ENCODE measurements at regions of chr7 and their contacts with region 1.

Region 1: GRCh38 chr7:45111298-45112223 is at the start of gene TBRG4:
- DNase-seq: peak; percentile 94
- ATAC-seq: peak; percentile 93
- H3K4me3 Mint-ChIP-seq: peak within 1 kb of the TSS; percentile 98
- H3K27ac Mint-ChIP-seq: peak within 1 kb of the TSS; percentile 97
- H3K4me1 Mint-ChIP-seq: peaks cover 44% of the 10 kb centered on the region
- H3K27me3 Mint-ChIP-seq: peaks cover 4% of the 10 kb centered on the region
- CTCF ChIP-seq: no peak
- total RNA-seq, gene TBRG4: 109 and 128 TPM in 2 replicates

Region 2: DNA sequence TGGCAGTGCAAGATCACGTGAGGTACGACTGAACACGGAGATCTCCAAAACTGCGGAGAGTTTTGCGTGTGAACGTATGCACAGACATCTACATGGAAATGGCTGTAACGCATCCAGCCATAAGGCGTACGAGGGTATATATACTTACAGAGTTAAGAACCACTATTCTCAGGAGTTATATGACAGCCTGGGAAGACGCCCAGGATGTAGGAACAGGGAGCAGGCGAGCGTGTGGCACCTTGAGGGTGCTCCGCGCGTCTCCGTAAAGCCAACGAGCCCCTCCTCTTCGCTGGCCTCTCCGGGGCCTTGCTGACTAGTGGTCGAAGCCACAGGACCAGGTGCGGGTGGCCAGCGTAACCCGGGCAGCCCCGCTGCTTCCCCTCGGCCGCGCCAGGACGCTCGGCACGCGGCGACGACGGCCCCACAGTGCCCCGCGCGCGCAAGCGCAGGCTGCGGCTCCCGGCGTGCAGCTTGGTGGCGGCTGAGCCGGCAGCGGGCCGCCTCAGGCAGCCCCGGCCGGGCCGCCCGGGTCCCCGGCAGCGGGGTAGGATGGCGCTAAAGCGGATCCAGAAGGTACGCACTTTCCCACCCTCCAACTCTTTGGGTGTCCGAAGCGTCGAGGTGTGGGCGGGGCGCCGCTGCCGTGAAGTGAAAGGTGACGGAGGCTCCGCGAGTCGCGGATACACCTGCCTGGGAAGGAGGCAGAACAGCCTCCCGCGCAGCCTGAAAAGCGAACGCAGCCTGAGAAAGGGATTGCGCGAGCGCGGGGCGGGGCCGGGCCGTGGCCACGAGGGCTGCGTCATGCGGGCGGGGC is 1185.4 kb before region 1 on chr7 and contains the start of gene UBE2D4:
- CTCF ChIA-PET with region 1: no interaction called
- POLR2A ChIA-PET with region 1: no interaction called
- intact Hi-C with region 1: loop called (anchors 2 kb)
- DNase-seq: peak; percentile 89
- ATAC-seq: peak; percentile 88
- H3K4me3 Mint-ChIP-seq: peak within 1 kb of the TSS; percentile 87
- H3K27ac Mint-ChIP-seq: peak within 1 kb of the TSS; percentile 93
- H3K4me1 Mint-ChIP-seq: peaks cover 24% of the 10 kb centered on the region
- H3K27me3 Mint-ChIP-seq: no peaks in the 10 kb centered on the region
- CTCF ChIP-seq: no peak
- total RNA-seq, gene UBE2D4: 18.9 and 19.6 TPM in 2 replicates

Region 3: DNA sequence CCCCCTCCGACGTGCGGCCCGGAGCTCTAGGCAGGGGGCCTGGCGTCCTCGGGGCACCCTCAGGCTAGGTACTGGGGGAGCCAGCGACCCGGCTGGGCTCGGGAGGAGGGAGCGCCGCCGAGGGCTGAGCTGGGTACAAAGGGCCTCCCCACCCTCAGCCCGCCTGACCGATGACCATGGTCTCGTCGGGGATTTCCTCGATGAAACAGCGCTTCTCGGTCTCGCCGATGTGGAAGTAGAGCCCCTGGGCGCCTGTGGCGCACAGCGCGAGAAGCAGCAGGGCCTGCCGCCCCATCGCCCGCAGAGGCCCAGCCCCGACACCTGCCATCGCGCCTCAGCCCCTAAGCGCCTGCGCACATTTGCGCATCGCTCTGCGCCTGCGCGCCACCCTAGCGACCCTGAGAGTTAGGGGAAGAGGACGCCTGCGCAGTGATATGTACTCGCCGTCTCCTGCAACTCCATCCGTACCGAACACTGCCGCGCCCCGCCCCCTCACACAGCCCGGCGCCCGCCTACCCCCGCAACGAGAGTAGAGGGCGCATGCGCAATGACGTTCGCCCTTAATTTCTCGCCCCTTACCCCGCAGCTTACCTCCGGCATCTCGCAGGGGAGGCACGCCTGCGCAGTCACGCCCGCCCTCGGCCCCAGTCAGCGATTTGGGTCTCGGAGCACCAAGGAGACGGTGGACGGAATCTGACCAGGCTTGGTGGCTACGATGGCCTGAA is 529.5 kb before region 1 on chr7 and contains the start of gene TMED4:
- CTCF ChIA-PET with region 1: no interaction called
- POLR2A ChIA-PET with region 1: interaction called, 4 read pairs
- intact Hi-C with region 1: loop called (anchors 2 kb)
- DNase-seq: peak; percentile 100
- ATAC-seq: peak; percentile 90
- H3K4me3 Mint-ChIP-seq: peak within 1 kb of the TSS; percentile 90
- H3K27ac Mint-ChIP-seq: peak within 1 kb of the TSS; percentile 95
- H3K4me1 Mint-ChIP-seq: peaks cover 29% of the 10 kb centered on the region
- H3K27me3 Mint-ChIP-seq: peaks cover 2% of the 10 kb centered on the region
- CTCF ChIP-seq: no peak
- total RNA-seq, gene TMED4: 61.7 and 70.1 TPM in 2 replicates

Region 4: GRCh38 chr7:44797329-44798251 is 314.0 kb before region 1 on chr7:
- CTCF ChIA-PET with region 1: no interaction called
- POLR2A ChIA-PET with region 1: no interaction called
- intact Hi-C with region 1: loop called (anchors 2 kb)
- DNase-seq: peak; percentile 70
- ATAC-seq: peak; percentile 56
- H3K4me3 Mint-ChIP-seq: peak overlapping the region; percentile 97
- H3K27ac Mint-ChIP-seq: peak overlapping the region; percentile 96
- H3K4me1 Mint-ChIP-seq: peaks cover 38% of the 10 kb centered on the region
- H3K27me3 Mint-ChIP-seq: no peaks in the 10 kb centered on the region
- CTCF ChIP-seq: no peak

Region 5: DNA sequence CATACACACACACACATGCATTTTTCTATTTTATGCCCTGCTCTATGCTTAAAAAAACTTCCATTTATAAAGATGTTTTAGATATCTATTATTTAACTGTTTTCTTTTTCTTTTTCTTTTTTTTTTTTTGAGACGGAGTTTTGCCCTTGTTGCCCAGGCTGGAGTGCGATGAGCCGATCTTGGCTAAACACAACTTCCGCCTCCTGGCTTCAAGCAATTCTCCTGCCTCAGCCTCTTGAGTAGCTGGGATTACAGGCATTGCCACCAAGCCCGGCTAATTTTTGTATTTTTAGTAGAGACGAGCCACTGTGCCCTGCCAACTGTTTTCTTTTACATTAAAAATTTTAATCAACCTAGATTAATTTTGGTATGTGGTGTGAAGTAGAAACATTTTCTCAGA is 180.6 kb before region 1 on chr7:
- CTCF ChIA-PET with region 1: no interaction called
- POLR2A ChIA-PET with region 1: no interaction called
- intact Hi-C with region 1: no loop called
- DNase-seq: no peak
- ATAC-seq: no peak
- H3K4me3 Mint-ChIP-seq: no peak overlapping the region
- H3K27ac Mint-ChIP-seq: no peak overlapping the region
- H3K4me1 Mint-ChIP-seq: no peaks in the 10 kb centered on the region
- H3K27me3 Mint-ChIP-seq: peaks cover 9% of the 10 kb centered on the region
- CTCF ChIP-seq: no peak

Region 6: DNA sequence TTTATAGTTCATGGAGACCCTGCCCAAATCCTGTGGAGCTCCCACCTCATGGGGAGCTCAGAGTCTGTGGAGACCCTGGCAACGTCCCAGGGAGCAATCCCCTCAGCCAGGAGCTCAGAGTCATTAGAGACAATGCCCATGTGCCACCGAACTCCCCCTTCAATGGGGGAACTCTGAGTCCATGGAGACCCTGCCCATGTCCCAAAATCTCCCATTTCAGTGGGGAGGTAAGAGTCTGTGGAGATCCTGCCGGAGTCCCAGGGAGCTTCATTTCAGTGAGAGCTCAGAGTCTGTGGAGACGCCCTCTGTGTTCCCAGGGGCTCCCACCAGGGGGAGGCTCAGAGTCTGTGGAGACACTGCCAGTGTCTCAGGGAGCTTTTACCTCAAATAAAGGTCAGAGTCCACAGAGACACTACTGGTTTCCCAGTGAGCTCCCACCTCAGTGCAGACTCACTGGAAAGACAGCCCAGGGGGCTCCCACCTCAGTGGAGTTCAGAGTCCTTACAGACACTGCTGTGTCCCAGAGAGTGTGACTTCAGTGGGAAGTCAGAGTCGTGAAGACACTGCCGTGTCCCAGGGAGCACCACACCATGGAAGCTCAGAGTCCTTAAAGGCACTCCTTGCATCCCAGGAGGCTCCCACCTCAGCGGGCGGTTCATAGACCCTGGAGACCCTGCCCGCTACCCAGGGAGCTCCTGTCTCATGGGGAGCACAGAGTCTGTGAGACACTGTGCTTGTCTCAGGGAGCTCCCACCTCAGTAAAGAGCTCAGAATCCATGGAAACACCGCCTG is 137.8 kb before region 1 on chr7:
- CTCF ChIA-PET with region 1: interaction called, 3 read pairs
- POLR2A ChIA-PET with region 1: interaction called, 23 read pairs
- intact Hi-C with region 1: loop called (anchors 1 kb)
- DNase-seq: no peak
- ATAC-seq: peak; percentile 26
- H3K4me3 Mint-ChIP-seq: no peak overlapping the region
- H3K27ac Mint-ChIP-seq: no peak overlapping the region
- H3K4me1 Mint-ChIP-seq: peaks cover 32% of the 10 kb centered on the region
- H3K27me3 Mint-ChIP-seq: no peaks in the 10 kb centered on the region
- CTCF ChIP-seq: no peak

Region 7: DNA sequence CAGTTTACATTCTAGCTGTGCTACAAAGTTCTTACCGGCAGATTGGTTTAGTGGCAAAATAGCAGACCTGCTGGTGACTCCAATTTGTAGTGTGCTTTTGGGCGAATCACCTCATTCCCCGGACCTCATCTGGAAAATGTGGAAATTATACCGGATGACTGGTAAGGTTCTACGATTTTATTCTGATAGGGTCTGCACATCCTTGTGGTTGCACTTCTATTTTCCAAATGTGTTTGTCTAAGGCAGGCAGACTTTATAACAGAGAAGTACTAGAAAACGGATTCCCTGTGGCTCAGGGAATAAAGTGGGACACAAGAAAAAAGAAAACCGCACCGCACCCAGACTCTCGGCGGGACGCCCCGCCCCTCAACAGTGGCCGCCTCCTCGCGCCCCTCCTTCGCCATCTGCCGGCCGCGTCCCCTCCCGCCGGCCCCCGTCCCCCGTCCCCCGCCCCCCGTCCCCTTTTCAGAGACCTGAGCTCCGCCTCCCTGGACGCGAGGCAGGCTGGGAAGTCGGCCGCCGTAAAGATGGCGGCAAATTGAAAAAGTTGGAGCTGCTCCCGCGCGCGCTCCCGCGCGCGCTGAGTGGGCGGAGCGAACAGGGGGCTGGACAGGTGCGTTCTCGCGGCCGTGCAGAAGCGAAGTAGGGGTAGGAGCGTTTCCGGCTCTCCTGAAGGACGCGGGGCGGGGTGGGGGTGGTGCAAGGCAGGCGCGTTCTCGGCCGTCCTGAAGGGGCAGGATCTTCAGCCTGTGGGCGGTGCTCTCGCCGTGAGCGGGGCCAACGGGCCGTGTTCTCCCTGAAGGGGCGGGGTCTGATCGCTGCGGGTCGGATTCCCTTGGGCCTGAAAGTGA is 112.1 kb before region 1 on chr7:
- CTCF ChIA-PET with region 1: no interaction called
- POLR2A ChIA-PET with region 1: interaction called, 47 read pairs
- intact Hi-C with region 1: loop called (anchors 1 kb)
- DNase-seq: peak; percentile 94
- ATAC-seq: peak; percentile 85
- H3K4me3 Mint-ChIP-seq: peak overlapping the region; percentile 95
- H3K27ac Mint-ChIP-seq: peak overlapping the region; percentile 94
- H3K4me1 Mint-ChIP-seq: peaks cover 60% of the 10 kb centered on the region
- H3K27me3 Mint-ChIP-seq: no peaks in the 10 kb centered on the region
- CTCF ChIP-seq: no peak

Region 8: DNA sequence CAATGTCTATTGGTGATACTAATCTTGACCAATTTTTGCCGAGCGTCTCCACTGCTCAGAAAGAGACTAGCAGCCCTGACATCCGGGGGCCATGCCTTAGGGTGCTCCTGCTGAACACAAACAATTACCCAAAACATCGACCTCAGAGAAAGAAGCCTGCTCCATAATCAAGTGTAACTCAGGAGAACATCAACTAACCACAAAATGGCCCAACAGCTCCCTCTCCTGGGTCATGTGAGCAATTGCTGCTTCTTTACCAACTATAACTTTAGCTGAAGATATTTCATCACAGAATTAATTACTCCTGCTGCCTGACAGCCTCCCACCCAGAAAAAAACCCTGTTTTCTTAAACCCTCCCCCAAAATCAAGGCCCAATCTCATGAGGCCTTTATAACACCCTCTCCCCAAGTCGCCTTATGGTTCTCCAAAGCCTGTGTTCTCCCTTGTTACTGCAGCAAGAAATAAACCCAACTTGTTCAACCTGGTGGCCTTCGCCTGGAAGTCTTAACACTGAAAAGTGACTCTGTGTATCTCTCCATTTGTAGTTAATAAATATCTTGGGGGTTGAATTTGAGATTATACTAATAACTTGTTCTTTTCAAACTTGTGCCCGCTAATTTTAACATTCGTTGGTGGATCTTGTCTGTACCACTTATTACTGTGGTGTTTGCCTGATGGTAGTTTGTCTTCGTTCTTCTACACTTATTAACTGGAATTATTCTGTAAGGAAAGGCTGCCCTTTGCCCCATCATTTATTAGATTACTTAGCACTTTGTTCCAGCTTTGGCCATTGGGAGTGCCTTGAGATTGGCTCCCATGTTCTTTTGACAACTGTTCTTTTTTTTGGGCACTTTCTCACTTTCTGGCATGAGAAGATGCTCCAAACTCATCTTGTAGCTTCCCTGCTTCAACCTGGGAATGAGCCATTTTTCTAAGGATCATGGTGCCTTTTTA is 24.8 kb after region 1 on chr7:
- CTCF ChIA-PET with region 1: interaction called, 5 read pairs
- POLR2A ChIA-PET with region 1: interaction called, 3 read pairs
- intact Hi-C with region 1: loop called (anchors 1 kb)
- DNase-seq: no peak
- ATAC-seq: peak; percentile 92
- H3K4me3 Mint-ChIP-seq: no peak overlapping the region
- H3K27ac Mint-ChIP-seq: no peak overlapping the region
- H3K4me1 Mint-ChIP-seq: peaks cover 11% of the 10 kb centered on the region
- H3K27me3 Mint-ChIP-seq: no peaks in the 10 kb centered on the region
- CTCF ChIP-seq: no peak

Region 9: GRCh38 chr7:47045207-47046051 is 1933.9 kb after region 1 on chr7:
- CTCF ChIA-PET with region 1: no interaction called
- POLR2A ChIA-PET with region 1: no interaction called
- intact Hi-C with region 1: no loop called
- DNase-seq: no peak
- ATAC-seq: no peak
- H3K4me3 Mint-ChIP-seq: no peak overlapping the region
- H3K27ac Mint-ChIP-seq: no peak overlapping the region
- H3K4me1 Mint-ChIP-seq: no peaks in the 10 kb centered on the region
- H3K27me3 Mint-ChIP-seq: no peaks in the 10 kb centered on the region
- CTCF ChIP-seq: no peak